ENCODE measurements at regions of chr3 and their contacts with region 1.

Region 1: GRCh38 chr3:194671900-194672808 is at the start of gene LSG1:
- DNase-seq: peak; percentile 80 to 96 (median 87)
- ATAC-seq: peak; percentile 97
- H3K4me3 ChIP-seq: peak within 1 kb of the TSS; percentile 83
- H3K4me3 Mint-ChIP-seq: peak within 1 kb of the TSS; percentile 99
- H3K27ac ChIP-seq: peak within 1 kb of the TSS; percentile 94 to 99
- H3K27ac Mint-ChIP-seq: peak within 1 kb of the TSS; percentile 99
- H3K4me1 ChIP-seq: peaks cover 18% of the 10 kb centered on the region
- H3K4me1 Mint-ChIP-seq: peaks cover 46% of the 10 kb centered on the region
- H3K27me3 ChIP-seq: no peaks in the 10 kb centered on the region
- H3K27me3 Mint-ChIP-seq: no peaks in the 10 kb centered on the region
- CTCF ChIP-seq: no peak
- total RNA-seq, gene LSG1: 37.9 to 44.6 TPM

Region 2: DNA sequence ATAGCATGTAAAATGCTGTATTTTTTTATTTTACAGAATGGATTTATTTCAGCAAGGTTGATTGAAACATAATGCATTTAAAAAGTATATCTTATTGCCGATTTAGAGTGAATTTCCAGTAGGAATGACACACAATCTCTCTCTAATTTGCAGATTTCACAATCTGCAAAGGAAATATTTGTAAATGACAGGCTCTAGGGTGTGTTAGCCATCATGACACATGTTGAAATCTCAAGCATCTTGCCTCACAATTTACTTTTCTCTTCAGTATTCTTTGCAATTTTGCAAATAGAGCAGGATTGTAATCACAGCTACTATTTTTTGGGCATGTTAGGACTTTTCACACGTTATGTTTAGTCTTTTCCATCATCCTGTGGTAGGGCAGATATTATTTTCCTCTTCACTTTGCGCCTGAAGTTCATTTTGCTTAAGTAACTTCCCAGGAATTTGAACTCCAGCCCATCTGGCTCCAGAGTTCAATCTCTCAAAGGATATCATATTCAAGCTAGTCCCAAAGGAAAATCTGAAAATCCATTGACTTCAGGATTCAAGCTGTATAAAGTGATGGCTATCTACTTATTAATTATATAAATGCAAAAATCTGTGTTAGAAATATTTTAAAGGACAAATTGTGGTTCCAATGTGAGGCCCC is 1172.9 kb before region 1 on chr3:
- CTCF ChIA-PET with region 1: no interaction called
- POLR2A ChIA-PET with region 1: no interaction called
- intact Hi-C with region 1: no loop called
- DNase-seq: no peak
- ATAC-seq: no peak
- H3K4me3 ChIP-seq: no peak overlapping the region
- H3K4me3 Mint-ChIP-seq: no peak overlapping the region
- H3K27ac ChIP-seq: no peak overlapping the region
- H3K27ac Mint-ChIP-seq: no peak overlapping the region
- H3K4me1 ChIP-seq: no peaks in the 10 kb centered on the region
- H3K4me1 Mint-ChIP-seq: no peaks in the 10 kb centered on the region
- H3K27me3 ChIP-seq: no peaks in the 10 kb centered on the region
- H3K27me3 Mint-ChIP-seq: no peaks in the 10 kb centered on the region
- CTCF ChIP-seq: no peak

Region 3: GRCh38 chr3:194486540-194487288 is 185.4 kb before region 1 on chr3 and contains the start of gene ATP13A3:
- CTCF ChIA-PET with region 1: no interaction called
- POLR2A ChIA-PET with region 1: no interaction called
- intact Hi-C with region 1: loop called in 1 of 2 experiments (anchors 5 kb)
- DNase-seq: peak; percentile 78 to 97 (median 90)
- ATAC-seq: peak; percentile 83
- H3K4me3 ChIP-seq: peak within 1 kb of the TSS; percentile 81
- H3K4me3 Mint-ChIP-seq: peak within 1 kb of the TSS; percentile 97
- H3K27ac ChIP-seq: peak within 1 kb of the TSS; percentile 66 to 76
- H3K27ac Mint-ChIP-seq: peak within 1 kb of the TSS; percentile 89
- H3K4me1 ChIP-seq: peaks cover 34% of the 10 kb centered on the region
- H3K4me1 Mint-ChIP-seq: peaks cover 44% of the 10 kb centered on the region
- H3K27me3 ChIP-seq: no peaks in the 10 kb centered on the region
- H3K27me3 Mint-ChIP-seq: no peaks in the 10 kb centered on the region
- CTCF ChIP-seq: no peak
- total RNA-seq, gene ATP13A3: 46.5 to 52.7 TPM

Region 4: DNA sequence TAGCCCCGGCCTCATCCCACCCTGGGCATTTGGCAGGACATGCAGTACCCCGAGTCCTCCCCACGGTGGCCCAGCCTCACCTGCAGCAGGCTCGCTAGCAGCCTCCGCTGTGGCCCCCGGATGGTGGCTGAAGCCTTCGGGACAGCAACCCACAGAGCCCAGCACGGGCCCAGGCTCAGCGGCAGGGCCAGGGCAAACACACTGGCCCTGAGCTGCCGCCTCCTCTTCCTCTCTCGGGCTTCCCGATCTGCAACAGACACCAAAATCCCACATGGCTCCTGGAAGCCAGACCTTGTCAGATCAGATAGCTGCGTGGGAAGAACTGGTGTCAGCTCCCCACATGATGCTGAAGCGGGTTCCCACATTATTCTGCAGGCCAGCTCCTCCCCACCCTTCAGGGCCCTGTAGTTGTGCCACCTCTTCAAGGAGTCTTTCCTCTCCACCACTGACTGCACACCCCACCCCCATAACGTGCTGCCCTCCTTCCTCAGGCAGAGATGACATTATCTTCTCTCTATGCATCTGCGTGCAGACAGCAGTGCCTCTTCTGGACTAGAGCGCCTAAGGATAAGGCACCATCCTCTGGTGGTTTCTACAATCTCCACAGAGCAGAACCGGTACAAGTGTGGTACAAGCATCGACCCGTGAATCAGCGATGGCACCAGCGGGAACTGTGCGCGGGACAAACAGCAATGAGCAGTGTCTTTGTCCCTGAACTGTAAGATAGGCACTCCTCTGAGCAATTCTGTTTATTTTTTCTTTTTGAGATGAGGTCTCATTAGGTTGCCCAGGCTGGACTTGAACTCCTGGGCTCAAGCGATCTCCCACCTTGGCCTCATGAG is 48.5 kb before region 1 on chr3:
- CTCF ChIA-PET with region 1: no interaction called
- POLR2A ChIA-PET with region 1: no interaction called
- intact Hi-C with region 1: no loop called
- DNase-seq: no peak
- ATAC-seq: no peak
- H3K4me3 ChIP-seq: no peak overlapping the region
- H3K4me3 Mint-ChIP-seq: no peak overlapping the region
- H3K27ac ChIP-seq: no peak overlapping the region
- H3K27ac Mint-ChIP-seq: no peak overlapping the region
- H3K4me1 ChIP-seq: no peaks in the 10 kb centered on the region
- H3K4me1 Mint-ChIP-seq: no peaks in the 10 kb centered on the region
- H3K27me3 ChIP-seq: no peaks in the 10 kb centered on the region
- H3K27me3 Mint-ChIP-seq: no peaks in the 10 kb centered on the region
- CTCF ChIP-seq: no peak

Region 5: GRCh38 chr3:194769020-194769643 is 97.0 kb after region 1 on chr3:
- CTCF ChIA-PET with region 1: interaction called, 4 read pairs
- POLR2A ChIA-PET with region 1: interaction called, 16 read pairs
- intact Hi-C with region 1: loop called (anchors 1 to 2 kb)
- DNase-seq: peak; percentile 77 to 98 (median 88)
- ATAC-seq: peak; percentile 97
- H3K4me3 ChIP-seq: peak overlapping the region; percentile 43
- H3K4me3 Mint-ChIP-seq: peak overlapping the region; percentile 87
- H3K27ac ChIP-seq: peak overlapping the region; percentile 51 to 65
- H3K27ac Mint-ChIP-seq: peak overlapping the region; percentile 84
- H3K4me1 ChIP-seq: peaks cover 16% of the 10 kb centered on the region
- H3K4me1 Mint-ChIP-seq: peaks cover 22% of the 10 kb centered on the region
- H3K27me3 ChIP-seq: no peaks in the 10 kb centered on the region
- H3K27me3 Mint-ChIP-seq: peaks cover 5% of the 10 kb centered on the region
- CTCF ChIP-seq: no peak

Region 6: DNA sequence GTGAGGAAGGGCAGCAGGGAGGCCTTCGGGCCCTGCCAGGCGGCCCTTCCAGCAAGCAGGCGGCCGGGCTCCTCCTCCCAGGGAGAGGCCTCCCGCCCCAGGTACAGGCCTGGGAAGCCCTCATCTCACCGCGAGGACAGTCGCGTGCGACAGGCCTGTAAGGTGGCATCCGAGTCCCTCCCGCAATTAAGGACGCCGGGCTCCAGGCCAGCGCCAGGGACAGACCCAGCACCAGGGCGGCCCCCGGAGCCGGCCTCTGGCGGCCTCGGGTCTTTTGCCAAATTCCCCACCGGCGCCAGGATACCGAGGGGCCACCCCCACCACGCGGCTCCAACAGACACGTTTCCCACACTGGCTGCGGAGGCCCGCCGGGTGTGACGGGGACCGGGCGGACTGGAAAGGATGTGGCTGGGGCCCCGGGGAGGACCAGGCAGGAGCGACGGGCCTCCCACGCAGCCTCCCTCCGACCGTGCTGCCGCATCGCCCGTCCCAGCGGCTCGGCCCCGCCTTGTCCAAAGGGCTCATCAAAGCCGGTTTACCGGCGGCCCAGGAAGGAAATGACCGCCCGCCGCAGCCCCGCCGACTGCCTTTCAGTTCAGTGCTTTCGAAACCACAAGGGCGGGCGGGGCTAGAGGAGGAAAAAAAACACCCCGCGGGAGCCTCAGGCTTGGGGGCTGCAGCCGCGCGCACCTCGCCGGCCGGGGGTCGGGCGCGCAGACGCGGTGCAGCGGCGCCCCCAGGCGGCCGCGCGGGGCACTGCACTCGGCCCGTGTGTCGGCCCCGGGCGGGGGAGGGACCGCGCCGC is 587.5 kb after region 1 on chr3:
- CTCF ChIA-PET with region 1: interaction called, 19 read pairs
- POLR2A ChIA-PET with region 1: interaction called, 8 read pairs
- intact Hi-C with region 1: loop called in 1 of 2 experiments (anchors 1 kb)
- DNase-seq: peak; percentile 73 to 96 (median 84)
- ATAC-seq: peak; percentile 83
- H3K4me3 ChIP-seq: peak overlapping the region; percentile 92
- H3K4me3 Mint-ChIP-seq: peak overlapping the region; percentile 67
- H3K27ac ChIP-seq: peak overlapping the region; percentile 85 to 93
- H3K27ac Mint-ChIP-seq: peak overlapping the region; percentile 93
- H3K4me1 ChIP-seq: peaks cover 35% of the 10 kb centered on the region
- H3K4me1 Mint-ChIP-seq: peaks cover 22% of the 10 kb centered on the region
- H3K27me3 ChIP-seq: no peaks in the 10 kb centered on the region
- H3K27me3 Mint-ChIP-seq: no peaks in the 10 kb centered on the region
- CTCF ChIP-seq: peak; percentile 33

Region 7: GRCh38 chr3:195542698-195543499 is 870.7 kb after region 1 on chr3 and contains the start of gene PPP1R2:
- CTCF ChIA-PET with region 1: no interaction called
- POLR2A ChIA-PET with region 1: interaction called, 6 read pairs
- intact Hi-C with region 1: loop called in 1 of 2 experiments (anchors 10 kb)
- DNase-seq: peak; percentile 82 to 97 (median 91)
- ATAC-seq: peak; percentile 80
- H3K4me3 ChIP-seq: peak within 1 kb of the TSS; percentile 70
- H3K4me3 Mint-ChIP-seq: peak within 1 kb of the TSS; percentile 88
- H3K27ac ChIP-seq: peak within 1 kb of the TSS; percentile 95 to 96
- H3K27ac Mint-ChIP-seq: peak within 1 kb of the TSS; percentile 93
- H3K4me1 ChIP-seq: peaks cover 52% of the 10 kb centered on the region
- H3K4me1 Mint-ChIP-seq: peaks cover 76% of the 10 kb centered on the region
- H3K27me3 ChIP-seq: no peaks in the 10 kb centered on the region
- H3K27me3 Mint-ChIP-seq: no peaks in the 10 kb centered on the region
- CTCF ChIP-seq: no peak
- total RNA-seq, gene PPP1R2: 205 to 210 TPM

Measured in CD4-positive, alpha-beta T cell (primary cell).